Activated B cell treated with CpG ODN at 0.5 μM for 24 hours (primary cell): ENCODE measurements at regions of chr1 and their contacts with region 1.

Region 1: DNA sequence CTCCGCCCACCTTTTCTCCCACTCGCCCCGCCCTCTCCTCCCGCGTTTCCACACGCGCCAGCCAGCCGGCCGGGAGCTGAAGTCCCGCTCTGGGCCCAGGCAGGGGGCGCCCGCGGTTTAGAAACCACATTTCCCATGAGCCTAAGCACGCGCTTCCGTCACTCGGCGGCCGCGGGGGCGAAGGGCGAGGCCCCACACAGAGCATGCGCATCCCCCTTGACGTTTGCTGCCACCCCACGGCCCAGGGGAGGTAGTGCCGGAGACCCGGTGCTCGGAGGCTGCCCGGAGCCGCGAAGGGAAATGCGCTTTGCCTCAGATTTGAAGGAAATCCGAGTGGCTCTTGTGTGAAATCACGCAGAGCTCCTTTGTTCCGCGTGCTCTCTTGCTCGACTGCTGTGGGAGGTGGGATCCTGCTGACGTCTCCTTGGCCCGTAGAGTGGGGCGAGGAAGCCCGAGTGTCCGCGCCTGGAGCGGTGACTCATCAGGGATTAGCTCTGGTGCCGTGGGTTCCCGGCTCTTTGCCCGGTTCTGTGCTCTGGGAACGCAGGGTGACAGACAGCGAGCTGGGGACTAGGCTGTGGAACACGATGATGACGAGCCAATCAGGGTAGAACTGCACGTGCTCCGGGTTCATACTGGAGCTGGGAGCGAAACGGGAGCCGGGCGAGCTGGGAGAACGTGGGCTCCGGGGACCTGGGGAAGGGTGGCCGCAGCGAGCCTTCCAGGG is 407 bp upstream of the B3GALNT2 start:
- DNase-seq: peak; percentile 96
- ATAC-seq: peak; percentile 81
- H3K4me3 Mint-ChIP-seq: peak overlapping the region; percentile 96
- H3K27ac Mint-ChIP-seq: peak overlapping the region; percentile 95
- H3K4me1 Mint-ChIP-seq: peaks cover 20% of the 10 kb centered on the region
- H3K27me3 Mint-ChIP-seq: no peaks in the 10 kb centered on the region
- CTCF ChIP-seq: no peak

Region 2: DNA sequence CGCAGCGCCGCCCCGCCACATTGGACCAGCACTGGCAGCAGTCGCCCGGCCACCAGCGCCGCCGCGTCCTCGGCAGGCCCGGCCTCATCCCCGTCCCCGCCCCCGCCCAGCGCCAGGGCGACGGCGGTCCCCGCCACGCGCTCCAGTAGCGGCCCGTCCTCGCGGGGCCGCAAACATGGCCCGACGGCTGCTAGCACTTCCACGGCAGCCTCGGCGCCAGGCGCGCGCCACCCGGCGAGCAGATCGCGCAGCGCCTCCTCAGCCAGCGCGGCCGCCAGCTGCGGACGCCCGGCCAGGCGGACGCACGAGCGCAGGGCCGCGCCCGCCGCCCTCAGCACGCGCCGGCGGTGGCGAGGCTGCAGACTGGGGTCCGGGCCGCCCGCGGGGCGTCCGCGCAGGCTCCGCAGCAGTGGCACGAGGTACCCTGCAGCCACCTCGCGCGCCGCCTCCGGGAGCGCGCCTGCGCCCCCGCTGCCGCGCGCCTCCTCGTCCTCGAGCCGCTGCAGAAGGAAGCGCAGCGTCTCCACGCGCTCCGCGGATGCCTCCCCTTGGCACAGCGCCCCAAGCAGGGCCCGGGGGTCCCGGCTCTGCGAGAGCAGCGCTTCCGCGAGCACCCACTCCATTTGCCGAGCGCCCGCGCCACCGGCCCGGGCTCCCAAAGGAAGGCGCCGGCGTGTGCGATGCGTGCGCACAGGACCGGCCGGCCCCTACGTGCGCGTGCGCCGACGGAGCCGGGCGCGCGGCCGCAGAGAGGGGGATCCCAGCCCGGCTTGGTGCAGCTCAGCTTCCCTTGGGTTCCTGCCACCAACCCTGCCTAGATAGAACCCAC is 1026.0 kb before region 1 on chr1 and contains the start of gene TARBP1:
- CTCF ChIA-PET with region 1: no interaction called
- POLR2A ChIA-PET with region 1: interaction called, 5 read pairs
- intact Hi-C with region 1: loop called (anchors 5 kb)
- DNase-seq: peak; percentile 82
- ATAC-seq: peak; percentile 66
- H3K4me3 Mint-ChIP-seq: peak within 1 kb of the TSS; percentile 85
- H3K27ac Mint-ChIP-seq: peak within 1 kb of the TSS; percentile 88
- H3K4me1 Mint-ChIP-seq: peaks cover 43% of the 10 kb centered on the region
- H3K27me3 Mint-ChIP-seq: peaks cover 5% of the 10 kb centered on the region
- CTCF ChIP-seq: no peak
- total RNA-seq, gene TARBP1: 27.0 and 30.4 TPM in 2 replicates

Region 3: GRCh38 chr1:235253219-235253962 is 251.3 kb before region 1 on chr1:
- CTCF ChIA-PET with region 1: interaction called, 3 read pairs
- POLR2A ChIA-PET with region 1: no interaction called
- intact Hi-C with region 1: loop called (anchors 10 kb)
- DNase-seq: no peak
- ATAC-seq: peak; percentile 97
- H3K4me3 Mint-ChIP-seq: no peak overlapping the region
- H3K27ac Mint-ChIP-seq: no peak overlapping the region
- H3K4me1 Mint-ChIP-seq: peaks cover 18% of the 10 kb centered on the region
- H3K27me3 Mint-ChIP-seq: no peaks in the 10 kb centered on the region
- CTCF ChIP-seq: peak; percentile 89

Region 4: GRCh38 chr1:235442788-235443429 is 61.8 kb before region 1 on chr1:
- CTCF ChIA-PET with region 1: no interaction called
- POLR2A ChIA-PET with region 1: no interaction called
- intact Hi-C with region 1: no loop called
- DNase-seq: no peak
- ATAC-seq: no peak
- H3K4me3 Mint-ChIP-seq: no peak overlapping the region
- H3K27ac Mint-ChIP-seq: no peak overlapping the region
- H3K4me1 Mint-ChIP-seq: no peaks in the 10 kb centered on the region
- H3K27me3 Mint-ChIP-seq: no peaks in the 10 kb centered on the region
- CTCF ChIP-seq: no peak

Region 5: DNA sequence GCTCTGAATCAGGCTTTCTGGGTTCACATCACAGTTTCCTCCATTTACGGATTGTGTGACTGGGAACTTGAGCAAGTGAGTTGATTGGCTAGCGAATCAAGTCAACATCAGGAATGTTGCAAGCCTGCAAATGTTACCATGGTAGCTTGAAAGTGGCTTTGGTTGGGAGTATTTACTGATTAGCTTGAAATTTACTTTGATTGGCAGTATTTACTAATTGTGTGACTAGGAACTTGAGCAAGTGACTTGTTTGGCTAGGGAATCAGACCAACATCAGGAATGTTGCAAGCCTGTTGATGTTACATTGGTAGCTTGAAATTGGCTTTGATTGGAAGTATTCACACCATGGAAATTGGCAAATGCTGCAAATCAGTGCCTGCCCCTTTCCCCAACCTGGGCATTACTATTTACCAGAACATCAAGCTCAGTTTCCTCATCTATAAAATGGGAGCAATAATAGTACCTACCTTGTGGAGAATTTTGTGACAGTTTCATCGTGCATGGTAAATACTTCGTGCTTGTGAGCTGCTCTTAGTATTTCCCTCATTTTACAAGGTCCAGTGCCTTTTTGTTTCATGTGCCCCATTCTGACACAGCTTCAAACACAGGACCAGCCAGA is 22.6 kb after region 1 on chr1:
- CTCF ChIA-PET with region 1: no interaction called
- POLR2A ChIA-PET with region 1: no interaction called
- intact Hi-C with region 1: no loop called
- DNase-seq: no peak
- ATAC-seq: no peak
- H3K4me3 Mint-ChIP-seq: no peak overlapping the region
- H3K27ac Mint-ChIP-seq: no peak overlapping the region
- H3K4me1 Mint-ChIP-seq: no peaks in the 10 kb centered on the region
- H3K27me3 Mint-ChIP-seq: peaks cover 4% of the 10 kb centered on the region
- CTCF ChIP-seq: no peak

Region 6: DNA sequence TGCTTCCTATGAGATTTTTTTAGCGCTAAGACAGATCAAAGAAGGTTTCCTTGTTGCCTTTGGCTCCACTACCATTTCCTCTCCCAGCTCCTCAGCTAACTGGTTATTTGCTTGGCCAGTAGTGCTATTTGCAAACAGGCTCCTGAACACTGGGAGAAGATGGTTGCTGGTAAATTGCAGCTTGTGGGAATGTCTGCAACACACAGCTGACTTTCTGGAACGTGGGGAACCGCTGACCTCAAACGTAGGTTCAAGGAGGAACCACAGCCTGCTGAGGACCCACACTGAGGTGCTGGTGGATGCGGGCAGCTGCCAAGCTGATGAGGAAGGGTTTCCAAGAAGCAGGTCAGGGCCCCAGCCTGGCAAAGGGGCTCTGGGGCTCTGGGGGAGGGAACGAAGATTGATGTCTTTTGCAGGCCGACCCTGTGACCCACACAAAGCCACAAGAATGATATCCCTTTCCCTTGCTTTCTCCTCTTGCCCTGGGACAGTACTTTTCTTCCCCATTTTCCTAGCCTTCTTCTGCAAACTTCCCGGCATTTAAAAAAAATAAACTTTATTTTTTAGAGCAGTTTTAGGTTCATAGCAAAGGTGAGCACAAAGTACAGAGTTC is 120.2 kb after region 1 on chr1:
- CTCF ChIA-PET with region 1: no interaction called
- POLR2A ChIA-PET with region 1: no interaction called
- intact Hi-C with region 1: no loop called
- DNase-seq: no peak
- ATAC-seq: no peak
- H3K4me3 Mint-ChIP-seq: no peak overlapping the region
- H3K27ac Mint-ChIP-seq: no peak overlapping the region
- H3K4me1 Mint-ChIP-seq: no peaks in the 10 kb centered on the region
- H3K27me3 Mint-ChIP-seq: peaks cover 22% of the 10 kb centered on the region
- CTCF ChIP-seq: no peak

Region 7: DNA sequence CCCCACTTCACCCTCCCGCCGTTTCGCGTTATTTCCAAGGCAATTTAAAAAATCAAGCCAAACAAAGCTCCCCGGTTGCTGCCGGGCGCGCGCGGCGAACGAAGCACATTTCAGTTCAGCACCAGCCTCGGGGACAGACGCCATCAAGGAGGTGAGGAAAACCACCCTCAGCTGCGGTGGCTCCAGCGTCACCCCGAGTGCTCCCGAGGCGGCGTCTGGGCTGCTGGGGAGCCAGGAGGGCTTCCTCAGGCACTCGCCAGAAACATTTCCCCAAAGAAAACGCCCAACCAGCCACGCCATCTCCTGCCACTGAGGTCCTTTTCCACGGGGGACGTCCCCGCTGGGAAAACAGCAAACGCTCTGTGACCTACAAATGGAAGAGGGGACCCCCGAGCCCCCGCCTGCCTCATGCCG is 144.3 kb after region 1 on chr1:
- CTCF ChIA-PET with region 1: no interaction called
- POLR2A ChIA-PET with region 1: no interaction called
- intact Hi-C with region 1: loop called (anchors 10 kb)
- DNase-seq: peak; percentile 40
- ATAC-seq: peak; percentile 65
- H3K4me3 Mint-ChIP-seq: peak overlapping the region; percentile 88
- H3K27ac Mint-ChIP-seq: no peak overlapping the region
- H3K4me1 Mint-ChIP-seq: peaks cover 15% of the 10 kb centered on the region
- H3K27me3 Mint-ChIP-seq: peaks cover 62% of the 10 kb centered on the region
- CTCF ChIP-seq: no peak

Region 8: DNA sequence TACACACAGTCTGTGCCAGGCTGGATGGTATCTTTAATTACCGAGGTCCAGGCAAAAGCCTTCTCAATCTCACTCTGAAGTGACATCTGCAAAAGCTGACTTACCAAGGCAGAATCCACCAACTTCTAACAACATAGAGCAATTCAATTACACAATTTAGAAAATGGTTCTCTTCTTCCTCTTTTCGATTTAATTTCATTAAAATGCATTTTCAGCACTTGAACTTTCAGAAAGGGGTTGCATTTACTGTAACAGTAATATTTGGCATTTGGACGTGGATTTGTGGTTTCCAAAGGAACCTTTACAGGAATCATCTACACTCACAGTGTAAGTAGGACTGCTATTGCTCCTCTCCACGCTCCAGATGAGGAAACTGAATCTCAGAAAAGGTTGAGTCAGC is 723.8 kb after region 1 on chr1:
- CTCF ChIA-PET with region 1: no interaction called
- POLR2A ChIA-PET with region 1: interaction called, 11 read pairs
- intact Hi-C with region 1: no loop called
- DNase-seq: no peak
- ATAC-seq: no peak
- H3K4me3 Mint-ChIP-seq: no peak overlapping the region
- H3K27ac Mint-ChIP-seq: no peak overlapping the region
- H3K4me1 Mint-ChIP-seq: no peaks in the 10 kb centered on the region
- H3K27me3 Mint-ChIP-seq: no peaks in the 10 kb centered on the region
- CTCF ChIP-seq: no peak

Region 9: DNA sequence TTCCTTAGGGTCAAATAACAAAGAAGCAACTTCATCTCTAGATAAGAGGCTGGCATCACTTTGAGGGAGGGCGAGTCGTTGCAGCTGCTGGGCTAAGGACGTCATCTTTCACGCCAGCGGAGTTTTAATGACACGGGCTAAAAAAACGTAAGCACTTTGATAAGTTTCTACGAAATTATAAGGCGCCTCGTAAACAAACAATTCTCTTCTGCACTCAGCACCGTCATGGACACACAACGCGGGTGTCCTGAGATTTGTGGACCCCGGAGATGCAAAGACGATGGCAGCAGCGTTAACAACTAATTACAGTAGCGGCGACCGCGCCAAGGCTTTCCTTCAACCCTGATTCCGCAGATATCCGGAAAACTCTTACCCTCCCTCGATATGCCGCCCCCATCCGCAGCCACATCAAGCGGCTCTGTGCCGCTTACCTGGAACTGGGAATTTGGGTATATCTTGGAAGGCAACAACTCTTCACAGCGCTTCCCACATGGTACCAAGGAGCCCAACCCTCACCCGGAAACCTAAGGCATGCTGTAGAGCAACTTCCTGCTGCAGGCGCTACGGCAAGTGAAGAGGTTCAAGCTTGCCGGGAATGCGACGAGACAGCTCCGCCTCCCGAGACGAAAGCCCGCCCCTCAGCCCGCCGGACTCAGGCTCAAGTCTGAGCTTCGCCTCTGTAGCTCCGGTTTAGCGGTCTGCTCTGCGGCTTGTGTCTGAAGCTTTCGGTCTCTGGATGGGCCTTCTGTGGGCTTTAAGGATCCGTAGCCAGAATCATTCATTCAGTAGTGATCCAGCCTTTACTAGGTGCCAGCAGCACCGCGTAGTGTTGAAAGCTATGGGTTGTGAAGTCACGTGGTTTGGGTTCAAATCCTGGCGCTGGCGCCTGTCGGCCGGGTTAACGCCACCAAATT is 1099.6 kb after region 1 on chr1 and contains the start of gene HEATR1:
- CTCF ChIA-PET with region 1: no interaction called
- POLR2A ChIA-PET with region 1: no interaction called
- intact Hi-C with region 1: loop called (anchors 10 kb)
- DNase-seq: peak; percentile 85
- ATAC-seq: peak; percentile 95
- H3K4me3 Mint-ChIP-seq: peak within 1 kb of the TSS; percentile 98
- H3K27ac Mint-ChIP-seq: peak within 1 kb of the TSS; percentile 89
- H3K4me1 Mint-ChIP-seq: peaks cover 26% of the 10 kb centered on the region
- H3K27me3 Mint-ChIP-seq: peaks cover 7% of the 10 kb centered on the region
- CTCF ChIP-seq: no peak
- total RNA-seq, gene HEATR1: 69.3 and 78.5 TPM in 2 replicates